ENCODE measurements at regions of chr6 and their contacts with region 1.

Region 1: GRCh38 chr6:108565893-108566292 is 5.2 kb downstream of the FOXO3 start:
- DNase-seq: peak in 1 of 2 donors; percentile 57
- ATAC-seq: peak in 7 of 8 donors; percentile 16 to 63 (median 47)
- H3K4me3 ChIP-seq: peak overlapping the region in 5 of 10 donors; percentile 13 to 93 (median 75)
- H3K27ac ChIP-seq: peak overlapping the region; percentile 14 to 100 (median 96)
- H3K4me1 ChIP-seq: peaks cover 12 to 85% (median 66%) of the 10 kb centered on the region in 9 donors
- H3K27me3 ChIP-seq: no peaks in the 10 kb centered on the region
- CTCF ChIP-seq: peak in 4 of 9 donors; percentile 22 to 48 (median 42)

Region 2: GRCh38 chr6:108592371-108593337 is 26.8 kb after region 1 on chr6:
- intact Hi-C with region 1: loop called in 1 of 10 experiments (anchors 1 kb)
- DNase-seq: no peak
- ATAC-seq: peak; percentile 20 to 59 (median 33)
- H3K4me3 ChIP-seq: no peak overlapping the region
- H3K27ac ChIP-seq: peak overlapping the region in 9 of 10 donors; percentile 46 to 85 (median 76)
- H3K4me1 ChIP-seq: peaks cover 68 to 100% (median 100%) of the 10 kb centered on the region in 9 donors
- H3K27me3 ChIP-seq: no peaks in the 10 kb centered on the region
- CTCF ChIP-seq: no peak